Caco-2 (cell line): ENCODE measurements at regions of chr11 and their contacts with region 1.

Region 1: DNA sequence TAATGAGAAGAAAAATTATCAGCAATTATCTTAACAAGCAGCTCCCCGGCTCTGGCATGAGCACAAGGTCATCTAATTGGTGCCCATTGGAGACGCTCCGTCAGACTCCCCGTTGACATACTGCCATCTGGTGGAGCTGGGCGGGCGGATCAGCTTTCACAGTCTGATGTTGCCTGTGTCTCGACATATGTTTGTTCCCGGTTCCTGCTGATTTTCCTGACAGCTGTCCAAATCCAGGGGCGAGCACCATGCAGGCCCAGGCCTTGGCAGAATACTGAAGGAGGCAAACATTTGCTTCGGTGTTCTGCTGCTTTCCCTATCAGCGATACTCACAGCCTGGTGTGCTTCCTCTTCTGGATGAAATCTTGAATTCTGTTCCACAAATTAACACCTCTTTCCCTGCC is 43.8 kb upstream of the BARX2 start:
- DNase-seq: peak; percentile 93 to 95
- H3K4me3 ChIP-seq: no peak overlapping the region
- H3K4me3 Mint-ChIP-seq: no peak overlapping the region
- H3K27ac Mint-ChIP-seq: peak overlapping the region; percentile 6
- H3K4me1 ChIP-seq: 0 out of 2 replicates have a peak, but pooled peaks cover 3% of the 10 kb centered on the region
- H3K4me1 Mint-ChIP-seq: peaks cover 12% of the 10 kb centered on the region
- H3K27me3 ChIP-seq: no peaks in the 10 kb centered on the region
- H3K27me3 Mint-ChIP-seq: no peaks in the 10 kb centered on the region
- CTCF ChIP-seq: peak; percentile 99

Region 2: DNA sequence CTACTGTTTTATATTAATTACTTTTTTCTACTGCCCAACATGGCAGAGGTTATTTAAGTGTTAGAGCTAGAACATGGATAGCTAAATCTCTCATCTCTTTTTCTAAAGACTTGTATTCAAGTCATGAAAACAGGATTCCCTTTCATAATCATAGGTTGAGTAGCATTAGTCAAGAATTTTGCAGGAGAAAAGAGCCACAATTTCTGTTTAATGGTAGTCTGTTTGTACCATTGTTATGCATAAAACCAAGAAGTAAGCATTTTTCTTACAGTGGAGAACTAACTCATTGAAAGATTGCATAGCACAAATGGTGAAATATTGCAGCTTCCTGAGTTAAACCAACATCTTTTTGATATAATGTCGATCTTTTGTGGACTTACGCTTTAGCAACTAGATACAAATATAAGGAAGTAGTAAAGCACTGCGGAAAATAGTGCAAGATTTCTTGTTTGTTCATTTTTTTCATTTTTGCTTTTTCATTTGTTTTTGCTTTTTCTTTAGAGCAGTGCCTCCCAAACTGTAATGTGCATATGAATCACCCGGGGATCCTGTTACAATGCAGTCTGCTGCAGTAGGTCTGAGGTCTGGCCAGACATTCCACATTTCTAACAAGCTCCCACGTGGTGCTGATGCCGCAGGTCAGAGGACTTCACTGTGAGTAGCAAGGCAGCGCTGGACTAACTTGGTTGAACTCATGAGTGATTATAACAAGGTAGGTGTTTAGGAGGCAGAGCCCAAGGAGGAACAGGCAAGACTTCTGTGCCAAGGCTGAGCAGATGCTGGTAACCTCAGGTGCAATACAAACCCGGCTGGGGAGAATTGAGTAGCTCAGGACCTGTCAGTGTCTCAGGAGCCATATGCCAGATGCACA is 749.1 kb before region 1 on chr11:
- CTCF ChIA-PET with region 1: no interaction called
- POLR2A ChIA-PET with region 1: no interaction called
- intact Hi-C with region 1: no loop called
- DNase-seq: no peak
- H3K4me3 ChIP-seq: no peak overlapping the region
- H3K4me3 Mint-ChIP-seq: no peak overlapping the region
- H3K27ac Mint-ChIP-seq: no peak overlapping the region
- H3K4me1 ChIP-seq: no peaks in the 10 kb centered on the region
- H3K4me1 Mint-ChIP-seq: no peaks in the 10 kb centered on the region
- H3K27me3 ChIP-seq: 0 out of 2 replicates have a peak, but pooled peaks cover 3% of the 10 kb centered on the region
- H3K27me3 Mint-ChIP-seq: peaks cover 56% of the 10 kb centered on the region
- CTCF ChIP-seq: no peak

Region 3: DNA sequence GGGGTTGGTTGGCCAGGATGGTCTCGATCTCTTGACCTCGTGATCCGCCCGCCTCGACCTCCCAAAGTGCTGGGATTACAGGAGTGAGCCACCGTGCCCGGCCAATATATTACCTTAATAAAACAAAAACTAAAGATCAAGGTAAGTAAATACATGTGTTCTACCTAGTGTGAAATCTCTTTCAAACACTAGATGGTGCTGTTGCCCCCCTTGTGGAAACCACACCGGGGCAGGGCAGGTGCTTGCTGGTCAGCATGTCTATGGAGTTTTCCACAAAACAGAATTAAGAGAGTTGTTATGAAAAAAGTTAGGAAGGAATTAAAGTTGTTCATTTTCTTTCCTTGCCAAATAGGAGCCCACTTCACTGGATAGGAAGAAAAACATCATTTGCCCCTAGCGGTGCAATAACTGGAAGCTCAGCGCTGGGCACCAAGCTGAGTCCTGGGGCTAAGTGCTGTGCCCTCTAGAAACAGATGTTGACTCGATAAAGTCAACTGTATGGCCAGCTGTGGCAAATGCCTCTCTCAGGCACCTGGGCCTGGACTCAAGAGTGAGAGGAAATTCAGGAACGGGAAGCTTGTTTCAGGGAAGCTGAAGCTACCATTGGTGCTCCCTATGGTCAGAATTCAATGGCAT is 447.1 kb before region 1 on chr11:
- CTCF ChIA-PET with region 1: interaction called, 5 read pairs
- POLR2A ChIA-PET with region 1: no interaction called
- intact Hi-C with region 1: loop called (anchors 1 kb)
- DNase-seq: peak; percentile 78 to 91
- H3K4me3 ChIP-seq: no peak overlapping the region
- H3K4me3 Mint-ChIP-seq: no peak overlapping the region
- H3K27ac Mint-ChIP-seq: no peak overlapping the region
- H3K4me1 ChIP-seq: no peaks in the 10 kb centered on the region; the same call in 1 of the 2 replicates
- H3K4me1 Mint-ChIP-seq: no peaks in the 10 kb centered on the region
- H3K27me3 ChIP-seq: no peaks in the 10 kb centered on the region; the same call in none of the 2 replicates
- H3K27me3 Mint-ChIP-seq: peaks cover 33% of the 10 kb centered on the region
- CTCF ChIP-seq: peak; percentile 96 to 97

Region 4: GRCh38 chr11:128956401-128957201 is 375.3 kb before region 1 on chr11:
- CTCF ChIA-PET with region 1: interaction called, 6 read pairs
- POLR2A ChIA-PET with region 1: no interaction called
- intact Hi-C with region 1: loop called (anchors 5 kb)
- DNase-seq: peak; percentile 75 to 87
- H3K4me3 ChIP-seq: no peak overlapping the region
- H3K4me3 Mint-ChIP-seq: no peak overlapping the region
- H3K27ac Mint-ChIP-seq: no peak overlapping the region
- H3K4me1 ChIP-seq: no peaks in the 10 kb centered on the region
- H3K4me1 Mint-ChIP-seq: no peaks in the 10 kb centered on the region
- H3K27me3 ChIP-seq: no peaks in the 10 kb centered on the region
- H3K27me3 Mint-ChIP-seq: peaks cover 12% of the 10 kb centered on the region
- CTCF ChIP-seq: peak; percentile 87 to 90

Region 5: DNA sequence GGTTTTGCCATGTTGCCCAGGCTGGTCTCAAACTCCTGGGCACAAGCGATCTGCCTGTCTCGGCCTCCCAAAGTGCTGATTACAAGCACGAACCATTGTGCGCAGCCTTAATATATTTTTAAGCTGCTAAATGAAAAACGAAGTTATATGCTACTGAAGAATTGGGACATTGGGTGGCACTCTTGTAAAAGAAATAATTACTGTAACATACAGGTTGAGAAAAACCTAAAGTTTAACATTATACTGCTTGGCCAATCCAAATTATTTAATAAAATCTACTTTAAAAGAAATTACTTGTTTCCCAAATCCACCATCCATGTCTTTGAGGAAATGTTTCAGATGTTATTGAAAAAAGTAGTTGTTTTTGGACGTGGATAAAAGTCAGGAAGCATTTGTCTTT is 101.9 kb before region 1 on chr11:
- CTCF ChIA-PET with region 1: interaction called, 13 read pairs
- POLR2A ChIA-PET with region 1: no interaction called
- intact Hi-C with region 1: loop called (anchors 1 kb)
- DNase-seq: no peak
- H3K4me3 ChIP-seq: no peak overlapping the region
- H3K4me3 Mint-ChIP-seq: no peak overlapping the region
- H3K27ac Mint-ChIP-seq: no peak overlapping the region
- H3K4me1 ChIP-seq: peaks cover 3% of the 10 kb centered on the region
- H3K4me1 Mint-ChIP-seq: peaks cover 2% of the 10 kb centered on the region
- H3K27me3 ChIP-seq: no peaks in the 10 kb centered on the region
- H3K27me3 Mint-ChIP-seq: no peaks in the 10 kb centered on the region
- CTCF ChIP-seq: no peak

Region 6: GRCh38 chr11:129279326-129280026 is 52.4 kb before region 1 on chr11:
- CTCF ChIA-PET with region 1: interaction called, 4 read pairs
- POLR2A ChIA-PET with region 1: no interaction called
- intact Hi-C with region 1: loop called (anchors 1 kb)
- DNase-seq: peak; percentile 94 to 98
- H3K4me3 ChIP-seq: peak overlapping the region; percentile 84
- H3K4me3 Mint-ChIP-seq: peak overlapping the region; percentile 90
- H3K27ac Mint-ChIP-seq: peak overlapping the region; percentile 84
- H3K4me1 ChIP-seq: peaks cover 79% of the 10 kb centered on the region
- H3K4me1 Mint-ChIP-seq: peaks cover 60% of the 10 kb centered on the region
- H3K27me3 ChIP-seq: no peaks in the 10 kb centered on the region
- H3K27me3 Mint-ChIP-seq: no peaks in the 10 kb centered on the region
- CTCF ChIP-seq: peak in 1 of 2 experiments; percentile 38

Region 7: GRCh38 chr11:129286813-129287212 is 45.1 kb before region 1 on chr11:
- CTCF ChIA-PET with region 1: interaction called, 4 read pairs
- POLR2A ChIA-PET with region 1: no interaction called
- intact Hi-C with region 1: loop called (anchors 1 kb)
- DNase-seq: peak; percentile 51 to 66
- H3K4me3 ChIP-seq: no peak overlapping the region
- H3K4me3 Mint-ChIP-seq: peak overlapping the region; percentile 59
- H3K27ac Mint-ChIP-seq: peak overlapping the region; percentile 88
- H3K4me1 ChIP-seq: peaks cover 90% of the 10 kb centered on the region
- H3K4me1 Mint-ChIP-seq: peaks cover 82% of the 10 kb centered on the region
- H3K27me3 ChIP-seq: no peaks in the 10 kb centered on the region
- H3K27me3 Mint-ChIP-seq: no peaks in the 10 kb centered on the region
- CTCF ChIP-seq: no peak

Region 8: GRCh38 chr11:129315781-129316481 is 15.9 kb before region 1 on chr11:
- CTCF ChIA-PET with region 1: interaction called, 16 read pairs
- POLR2A ChIA-PET with region 1: interaction called, 7 read pairs
- intact Hi-C with region 1: loop called (anchors 1 kb)
- DNase-seq: peak; percentile 99 to 100
- H3K4me3 ChIP-seq: no peak overlapping the region
- H3K4me3 Mint-ChIP-seq: peak overlapping the region; percentile 66
- H3K27ac Mint-ChIP-seq: peak overlapping the region; percentile 94
- H3K4me1 ChIP-seq: peaks cover 69% of the 10 kb centered on the region
- H3K4me1 Mint-ChIP-seq: peaks cover 80% of the 10 kb centered on the region
- H3K27me3 ChIP-seq: no peaks in the 10 kb centered on the region
- H3K27me3 Mint-ChIP-seq: no peaks in the 10 kb centered on the region
- CTCF ChIP-seq: peak in 1 of 2 experiments; percentile 83

Region 9: DNA sequence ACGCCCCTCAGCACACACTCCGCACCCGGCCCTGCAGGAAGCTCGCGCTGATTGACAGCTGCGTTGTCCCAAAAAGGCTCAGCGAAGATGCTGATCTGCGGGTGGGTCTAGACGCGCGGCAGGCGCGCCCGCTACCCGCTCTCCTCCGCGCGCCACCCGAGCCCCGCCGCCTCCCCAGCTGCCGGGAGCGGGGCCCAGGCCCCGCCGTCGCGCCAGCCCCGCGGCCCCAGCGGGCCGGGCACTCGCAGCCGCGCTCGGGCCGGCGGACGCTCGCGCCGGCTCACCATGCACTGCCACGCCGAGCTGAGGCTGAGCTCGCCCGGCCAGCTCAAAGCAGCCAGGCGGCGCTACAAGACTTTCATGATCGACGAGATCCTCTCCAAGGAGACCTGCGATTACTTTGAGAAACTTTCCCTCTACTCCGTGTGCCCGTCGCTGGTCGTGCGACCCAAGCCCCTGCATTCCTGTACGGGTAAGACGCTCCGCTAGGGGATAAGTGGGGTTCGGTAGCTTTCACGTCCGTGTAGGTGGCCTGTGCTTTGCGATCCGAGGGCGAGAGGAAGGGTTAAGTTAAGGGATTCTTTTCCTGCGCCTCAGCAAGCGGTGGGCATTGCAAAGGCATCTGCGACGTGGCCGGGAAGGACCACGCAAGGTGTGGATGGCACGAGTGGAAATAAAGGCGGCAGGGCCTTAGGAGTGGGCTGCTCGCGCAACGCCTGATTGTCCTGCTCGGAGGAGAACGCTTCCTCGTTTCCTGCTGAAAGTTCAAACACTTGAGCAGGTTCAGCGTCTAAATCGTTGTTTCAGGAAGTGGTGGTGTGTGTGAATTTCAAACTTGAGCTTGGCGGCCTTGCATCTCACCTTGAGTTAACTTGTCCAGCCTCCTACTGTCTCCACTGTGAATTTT is 44.1 kb after region 1 on chr11 and contains the start of gene BARX2:
- CTCF ChIA-PET with region 1: no interaction called
- POLR2A ChIA-PET with region 1: no interaction called
- intact Hi-C with region 1: no loop called
- DNase-seq: peak; percentile 88 to 90
- H3K4me3 ChIP-seq: peak within 1 kb of the TSS; percentile 50
- H3K4me3 Mint-ChIP-seq: peak within 1 kb of the TSS; percentile 77
- H3K27ac Mint-ChIP-seq: peak within 1 kb of the TSS; percentile 27
- H3K4me1 ChIP-seq: 0 out of 2 replicates have a peak, but pooled peaks cover 6% of the 10 kb centered on the region
- H3K4me1 Mint-ChIP-seq: peaks cover 6% of the 10 kb centered on the region
- H3K27me3 ChIP-seq: peaks cover 6% of the 10 kb centered on the region
- H3K27me3 Mint-ChIP-seq: peaks cover 30% of the 10 kb centered on the region
- CTCF ChIP-seq: peak; percentile 71 to 96
- total RNA-seq, gene BARX2: 0.82 and 1.1 TPM in 2 replicates